Activated CD4-positive, alpha-beta T cell treated with anti-CD3 and anti-CD28 coated beads, Interleukin-2, amount 10 ng/mL, durations not matched to agents 24 days and 14 days (primary cell): ENCODE measurements at regions of chr1 and their contacts with region 1.

Region 1: GRCh38 chr1:172638885-172639831 is 19.7 kb upstream of the FASLG start:
- DNase-seq: peak; percentile 92
- H3K4me3 Mint-ChIP-seq: peak overlapping the region; percentile 77
- H3K27ac Mint-ChIP-seq: peak overlapping the region; percentile 100
- H3K4me1 Mint-ChIP-seq: peaks cover 74% of the 10 kb centered on the region
- H3K27me3 Mint-ChIP-seq: peaks cover 3% of the 10 kb centered on the region

Region 2: DNA sequence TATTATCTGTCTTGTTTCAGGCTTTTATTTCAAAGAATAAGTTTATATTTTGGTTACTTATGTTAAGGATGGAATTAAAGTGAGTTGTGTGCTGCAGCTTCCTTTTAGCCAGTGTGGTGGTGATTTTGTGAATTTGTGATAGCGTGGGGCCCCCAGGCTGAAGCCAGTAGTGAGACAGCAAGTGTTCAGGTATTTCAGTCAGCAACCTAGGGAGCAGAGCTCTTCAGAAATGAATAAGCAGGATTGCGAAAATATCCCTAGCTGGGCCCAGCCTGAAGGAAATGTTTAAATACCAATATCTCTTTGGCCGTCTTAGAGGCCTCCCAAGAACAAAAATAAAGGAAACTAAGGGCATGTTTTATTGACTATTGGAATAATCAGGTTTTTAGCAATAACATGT is 369.5 kb before region 1 on chr1:
- intact Hi-C with region 1: loop called (anchors 1 kb)
- DNase-seq: no peak
- H3K4me3 Mint-ChIP-seq: peak overlapping the region; percentile 29
- H3K27ac Mint-ChIP-seq: peak overlapping the region; percentile 88
- H3K4me1 Mint-ChIP-seq: peaks cover 44% of the 10 kb centered on the region
- H3K27me3 Mint-ChIP-seq: no peaks in the 10 kb centered on the region

Region 3: GRCh38 chr1:172449585-172450534 is 189.3 kb before region 1 on chr1:
- intact Hi-C with region 1: loop called (anchors 2 kb)
- DNase-seq: peak; percentile 83
- H3K4me3 Mint-ChIP-seq: peak overlapping the region; percentile 39
- H3K27ac Mint-ChIP-seq: peak overlapping the region; percentile 65
- H3K4me1 Mint-ChIP-seq: peaks cover 27% of the 10 kb centered on the region
- H3K27me3 Mint-ChIP-seq: peaks cover 1% of the 10 kb centered on the region

Region 4: GRCh38 chr1:172609528-172609927 is 29.6 kb before region 1 on chr1:
- intact Hi-C with region 1: loop called (anchors 2 kb)
- DNase-seq: no peak
- H3K4me3 Mint-ChIP-seq: no peak overlapping the region
- H3K27ac Mint-ChIP-seq: no peak overlapping the region
- H3K4me1 Mint-ChIP-seq: peaks cover 13% of the 10 kb centered on the region
- H3K27me3 Mint-ChIP-seq: no peaks in the 10 kb centered on the region

Region 5: GRCh38 chr1:172671591-172671990 is 32.4 kb after region 1 on chr1:
- intact Hi-C with region 1: loop called (anchors 1 kb)
- DNase-seq: no peak
- H3K4me3 Mint-ChIP-seq: peak overlapping the region; percentile 24
- H3K27ac Mint-ChIP-seq: no peak overlapping the region
- H3K4me1 Mint-ChIP-seq: peaks cover 79% of the 10 kb centered on the region
- H3K27me3 Mint-ChIP-seq: no peaks in the 10 kb centered on the region

Region 6: GRCh38 chr1:172708452-172708851 is 69.3 kb after region 1 on chr1:
- intact Hi-C with region 1: loop called (anchors 1 kb)
- DNase-seq: peak; percentile 87
- H3K4me3 Mint-ChIP-seq: peak overlapping the region; percentile 56
- H3K27ac Mint-ChIP-seq: peak overlapping the region; percentile 88
- H3K4me1 Mint-ChIP-seq: peaks cover 49% of the 10 kb centered on the region
- H3K27me3 Mint-ChIP-seq: peaks cover 2% of the 10 kb centered on the region

Region 7: DNA sequence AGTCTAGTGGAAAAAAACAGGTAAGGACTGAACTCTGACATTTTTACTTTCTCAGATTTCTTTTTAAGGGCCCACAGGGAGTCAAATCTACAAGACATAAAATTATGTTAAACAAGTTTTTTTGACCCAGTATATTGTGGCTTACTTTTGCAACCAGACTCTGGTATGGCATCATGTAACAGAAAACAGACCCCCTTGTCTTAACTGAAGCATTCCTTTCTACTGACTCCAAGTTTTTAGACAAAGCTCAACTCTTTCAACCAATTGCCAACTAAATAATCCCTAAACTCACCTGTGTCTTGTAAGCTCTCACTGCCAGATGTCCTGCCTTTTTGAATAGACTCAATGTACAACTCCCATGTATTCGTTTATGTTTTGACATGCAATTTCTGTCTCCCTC is 84.1 kb after region 1 on chr1:
- intact Hi-C with region 1: no loop called
- DNase-seq: no peak
- H3K4me3 Mint-ChIP-seq: no peak overlapping the region
- H3K27ac Mint-ChIP-seq: no peak overlapping the region
- H3K4me1 Mint-ChIP-seq: peaks cover 30% of the 10 kb centered on the region
- H3K27me3 Mint-ChIP-seq: no peaks in the 10 kb centered on the region

Region 8: DNA sequence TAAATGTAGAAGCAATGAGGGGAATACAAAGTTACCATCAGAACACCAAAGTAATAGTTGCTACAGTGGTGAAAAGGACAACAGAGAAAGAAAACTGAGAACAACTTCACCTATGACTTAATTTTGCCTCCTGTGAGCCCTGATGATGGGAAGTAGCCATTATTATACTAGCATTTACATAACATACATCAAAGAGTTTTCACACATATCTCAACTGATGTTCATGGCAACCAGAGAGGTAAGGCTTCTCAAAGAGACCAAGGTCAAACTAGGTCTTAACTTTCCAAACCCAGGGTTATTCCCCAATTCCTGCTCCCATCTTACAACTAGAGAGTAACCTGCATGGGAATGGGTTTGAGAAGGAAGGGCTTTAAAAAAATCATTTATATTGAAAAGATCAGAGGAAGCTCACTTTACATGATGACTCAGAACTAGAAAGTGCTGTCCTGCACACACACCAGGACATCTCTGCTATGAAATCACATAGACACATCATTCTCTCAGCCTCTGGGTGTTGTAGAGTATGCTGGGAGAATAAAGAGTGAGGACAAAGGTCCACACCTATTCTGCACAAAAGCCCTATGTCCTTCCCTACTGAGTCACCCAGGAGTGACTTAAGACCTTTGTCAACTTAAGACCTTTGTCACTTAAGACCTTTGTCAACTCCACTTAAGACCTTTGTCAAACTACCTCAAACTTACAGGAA is 231.9 kb after region 1 on chr1:
- intact Hi-C with region 1: loop called (anchors 5 kb)
- DNase-seq: peak; percentile 67
- H3K4me3 Mint-ChIP-seq: no peak overlapping the region
- H3K27ac Mint-ChIP-seq: no peak overlapping the region
- H3K4me1 Mint-ChIP-seq: peaks cover 33% of the 10 kb centered on the region
- H3K27me3 Mint-ChIP-seq: peaks cover 39% of the 10 kb centered on the region

Region 9: DNA sequence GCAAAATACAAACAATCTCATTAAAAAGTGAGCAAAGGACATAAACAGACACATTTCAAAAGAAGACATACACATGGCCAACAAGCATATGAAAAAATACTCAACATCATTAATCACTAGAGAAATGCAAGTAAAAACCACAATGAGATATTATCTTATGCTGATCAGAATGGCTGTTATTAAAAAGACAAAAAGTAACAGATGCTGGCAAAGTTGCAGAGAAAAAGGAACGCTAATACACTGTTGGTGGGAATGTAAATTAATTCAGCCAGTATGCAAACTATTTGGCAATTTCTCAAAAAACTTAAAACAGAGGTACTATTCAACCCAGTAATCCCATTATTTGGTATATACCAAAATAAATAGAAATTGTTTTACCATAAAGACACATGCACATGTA is 443.8 kb after region 1 on chr1:
- intact Hi-C with region 1: no loop called
- DNase-seq: no peak
- H3K4me3 Mint-ChIP-seq: no peak overlapping the region
- H3K27ac Mint-ChIP-seq: no peak overlapping the region
- H3K4me1 Mint-ChIP-seq: no peaks in the 10 kb centered on the region
- H3K27me3 Mint-ChIP-seq: peaks cover 12% of the 10 kb centered on the region